AG04449 (cell line): ENCODE measurements at regions of chr11 and their contacts with region 1.

Region 1: DNA sequence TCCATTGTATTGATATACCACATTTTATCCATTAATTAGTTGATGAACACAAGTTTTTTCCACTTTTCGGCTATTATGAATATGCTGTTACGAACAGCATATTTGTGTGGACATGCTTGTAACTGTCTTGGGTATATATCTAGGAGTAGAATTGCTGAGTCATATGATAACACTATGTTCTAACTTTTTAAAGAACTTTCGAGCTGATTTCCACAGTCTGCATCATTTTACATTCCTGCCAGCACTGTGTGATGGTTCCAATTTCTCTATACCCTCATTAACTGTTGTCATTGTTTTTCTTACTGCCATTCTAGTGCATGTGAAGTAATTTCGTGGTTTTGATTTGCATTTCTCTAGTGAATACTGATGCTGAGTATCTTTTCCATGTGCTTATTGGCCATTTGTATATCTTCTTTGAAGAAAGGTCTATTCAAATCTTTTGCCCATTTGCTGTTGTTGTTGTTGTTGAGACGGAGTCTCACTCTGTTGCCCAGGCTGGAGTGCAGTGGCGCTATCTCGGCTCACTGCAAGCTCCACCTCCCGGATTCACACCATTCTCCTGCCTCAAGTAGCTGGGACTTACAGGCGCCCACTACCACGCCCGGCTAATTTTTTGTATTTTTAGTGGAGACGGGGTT is 7.4 kb upstream of the RCE1 start:
- DNase-seq: no peak
- H3K4me3 ChIP-seq: no peak overlapping the region
- CTCF ChIP-seq: no peak

Region 2: DNA sequence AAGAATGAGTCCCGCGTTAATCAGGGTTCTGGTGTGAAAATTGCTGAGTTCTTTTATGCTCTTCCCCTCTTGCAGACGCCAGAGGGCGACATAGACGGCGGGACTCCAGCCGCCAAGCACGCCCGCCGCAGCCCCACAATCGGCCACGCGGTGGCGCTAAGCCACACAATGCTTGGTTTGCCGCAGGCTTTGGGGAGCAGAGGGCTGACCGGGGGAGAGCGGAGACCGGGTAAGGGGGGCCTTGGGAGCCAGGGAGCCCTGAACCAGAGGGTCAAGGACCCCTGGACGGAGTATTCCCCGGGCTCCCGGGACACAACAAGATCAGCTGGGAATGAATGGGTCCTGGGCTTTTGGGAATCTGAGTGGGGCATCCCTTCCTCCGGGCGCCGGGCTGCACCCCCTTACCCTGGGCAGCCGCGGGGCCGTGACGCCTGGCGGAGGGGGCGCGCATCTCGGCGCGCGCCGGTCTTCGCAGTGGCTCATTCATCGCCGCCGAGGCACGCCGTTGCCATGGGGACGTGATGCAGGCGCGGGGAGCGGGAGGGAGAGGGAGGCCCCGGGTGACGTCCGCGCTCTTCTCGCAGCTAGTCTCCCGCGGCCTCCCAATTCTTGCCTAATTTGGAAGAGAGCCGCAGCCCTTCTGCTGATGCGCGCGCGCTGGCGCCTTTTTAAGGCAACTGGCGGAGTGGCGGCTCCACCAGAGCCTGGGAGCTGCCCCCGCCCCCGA is 427.2 kb before region 1 on chr11:
- CTCF ChIA-PET with region 1: interaction called, 11 read pairs
- POLR2A ChIA-PET with region 1: no interaction called
- DNase-seq: peak; percentile 61
- H3K4me3 ChIP-seq: peak overlapping the region; percentile 59
- CTCF ChIP-seq: peak; percentile 100

Region 3: DNA sequence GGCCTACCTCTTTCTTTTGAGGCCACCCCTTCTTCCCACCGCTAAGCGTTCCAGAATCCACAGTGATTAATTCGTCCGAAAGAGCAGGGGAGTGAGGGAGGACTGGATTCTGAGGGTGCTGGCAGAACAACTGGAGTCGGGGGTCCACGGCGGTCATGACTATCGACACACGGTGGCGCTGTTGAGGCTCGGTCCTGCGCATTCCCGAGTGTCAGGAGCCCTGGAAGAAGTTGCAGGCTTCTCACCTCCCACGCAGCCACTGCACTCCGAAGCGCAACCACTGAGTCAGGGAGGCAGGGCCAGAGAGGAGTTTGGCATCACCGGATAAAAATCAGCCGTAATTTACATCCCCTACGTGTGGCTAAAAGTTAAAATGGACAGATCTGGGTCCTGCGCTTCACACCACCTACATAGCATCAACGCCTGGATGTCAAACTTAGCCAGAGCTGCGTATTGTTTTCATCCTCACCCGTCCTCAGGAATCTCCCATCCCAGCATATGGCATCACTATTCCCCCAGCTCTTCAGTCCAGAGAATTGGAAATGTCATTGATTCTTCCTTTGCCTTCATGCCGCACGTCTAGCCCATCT is 256.8 kb before region 1 on chr11:
- CTCF ChIA-PET with region 1: interaction called, 10 read pairs
- POLR2A ChIA-PET with region 1: no interaction called
- DNase-seq: no peak
- H3K4me3 ChIP-seq: no peak overlapping the region
- CTCF ChIP-seq: peak; percentile 89

Region 4: DNA sequence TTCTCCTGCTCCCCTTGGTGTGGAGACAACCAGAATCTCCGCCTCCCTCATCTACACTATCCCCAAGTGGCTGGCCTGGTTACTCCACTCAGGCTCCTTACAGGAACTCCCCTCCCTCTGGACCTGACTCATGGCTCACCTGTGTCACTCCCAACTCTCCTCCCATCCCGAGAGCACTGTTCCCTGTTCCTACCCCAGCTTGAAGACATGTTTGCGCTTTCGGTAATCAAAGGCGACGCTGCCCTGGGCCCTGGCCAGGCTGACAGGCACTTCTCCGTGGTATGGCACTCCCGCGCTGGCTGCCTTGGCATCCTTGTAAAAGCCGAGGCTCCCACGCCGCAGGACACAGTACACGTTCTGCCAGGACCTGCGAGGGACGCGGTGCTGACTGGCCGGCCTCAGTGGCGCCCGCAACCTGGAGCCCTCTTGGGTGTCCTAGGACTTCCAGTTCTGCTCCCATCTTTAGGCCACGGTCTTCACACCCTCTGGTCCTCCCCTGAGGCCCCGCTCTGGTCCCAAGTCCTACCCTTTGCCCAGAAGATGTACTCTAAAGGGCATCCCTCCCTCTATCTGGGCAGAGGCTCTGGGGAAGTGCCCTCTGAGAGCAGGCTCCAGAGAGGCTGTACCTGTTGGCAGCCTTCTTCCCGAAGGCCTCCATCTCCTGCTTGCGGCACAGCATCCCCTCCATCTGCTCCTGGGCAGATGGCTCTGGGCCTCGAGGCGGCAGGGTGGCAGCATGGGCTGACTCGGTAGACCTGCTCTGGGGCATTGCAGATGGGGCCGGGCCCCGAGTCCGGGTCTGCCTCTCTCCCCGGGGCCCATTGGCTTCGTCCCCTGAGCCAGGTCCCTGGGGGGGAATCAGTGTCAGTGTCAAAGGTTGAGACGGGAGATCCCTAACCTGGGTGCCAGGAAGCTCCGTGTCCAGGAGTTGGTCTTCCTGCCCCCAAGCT is 148.8 kb before region 1 on chr11:
- CTCF ChIA-PET with region 1: interaction called, 246 read pairs
- POLR2A ChIA-PET with region 1: no interaction called
- DNase-seq: no peak
- H3K4me3 ChIP-seq: no peak overlapping the region
- CTCF ChIP-seq: no peak

Region 5: GRCh38 chr11:66694732-66695207 is 141.1 kb before region 1 on chr11:
- CTCF ChIA-PET with region 1: interaction called, 246 read pairs
- POLR2A ChIA-PET with region 1: no interaction called
- DNase-seq: peak; percentile 82
- H3K4me3 ChIP-seq: no peak overlapping the region
- CTCF ChIP-seq: peak; percentile 78

Region 6: GRCh38 chr11:66818231-66818955 is 17.5 kb before region 1 on chr11:
- CTCF ChIA-PET with region 1: interaction called, 26 read pairs
- POLR2A ChIA-PET with region 1: no interaction called
- DNase-seq: no peak
- H3K4me3 ChIP-seq: no peak overlapping the region
- CTCF ChIP-seq: no peak

Region 7: GRCh38 chr11:66855574-66856495 is 19.9 kb after region 1 on chr11:
- CTCF ChIA-PET with region 1: no interaction called
- POLR2A ChIA-PET with region 1: no interaction called
- DNase-seq: no peak
- H3K4me3 ChIP-seq: peak overlapping the region; percentile 75
- CTCF ChIP-seq: no peak